SK-N-SH (cell line): ENCODE measurements at regions of chr11 and their contacts with region 1.

Region 1: DNA sequence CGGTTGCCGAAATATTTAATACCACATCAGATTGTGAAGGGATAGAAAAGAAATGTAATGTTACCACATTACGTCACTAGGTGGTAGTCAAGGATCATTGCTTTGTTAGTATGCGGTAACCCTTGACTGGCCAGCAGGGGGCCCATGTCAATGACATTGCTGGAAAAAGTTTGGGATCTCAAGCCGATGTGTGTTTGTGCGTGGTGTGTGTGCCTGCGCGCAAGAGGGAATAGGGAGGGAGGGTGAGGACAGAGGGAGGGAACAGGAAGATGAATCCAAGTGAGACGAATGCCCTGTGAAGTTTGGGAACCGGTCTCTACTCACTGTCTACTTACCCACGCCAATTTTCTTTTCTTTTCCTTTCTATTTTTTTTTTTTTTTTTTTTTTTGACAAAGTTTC is 10.7 kb upstream of the MRGPRX2 start:
- DNase-seq: peak; percentile 81
- H3K4me3 ChIP-seq: peak overlapping the region; percentile 27 to 30; a peak in 3 of 4 replicates
- H3K27ac ChIP-seq: no peak overlapping the region
- H3K4me1 ChIP-seq: peaks cover 0 to 2% of the 10 kb centered on the region in 2 experiments; a peak in 1 of 4 replicates
- H3K27me3 ChIP-seq: no peaks in the 10 kb centered on the region
- CTCF ChIP-seq: peak; percentile 99
- EP300 ChIP-seq: no peak
- RAD21 ChIP-seq: peak; percentile 93

Region 2: GRCh38 chr11:18310800-18311340 is 760.4 kb before region 1 on chr11:
- CTCF ChIA-PET with region 1: no interaction called
- POLR2A ChIA-PET with region 1: no interaction called
- DNase-seq: no peak
- H3K4me3 ChIP-seq: no peak overlapping the region
- H3K27ac ChIP-seq: no peak overlapping the region
- H3K4me1 ChIP-seq: peaks cover 0 to 8% of the 10 kb centered on the region in 2 experiments; a peak in 3 of 4 replicates
- H3K27me3 ChIP-seq: no peaks in the 10 kb centered on the region
- CTCF ChIP-seq: no peak
- EP300 ChIP-seq: no peak
- RAD21 ChIP-seq: no peak

Region 3: GRCh38 chr11:18934195-18934814 is 136.9 kb before region 1 on chr11:
- CTCF ChIA-PET with region 1: no interaction called
- POLR2A ChIA-PET with region 1: no interaction called
- DNase-seq: no peak
- H3K4me3 ChIP-seq: no peak overlapping the region
- H3K27ac ChIP-seq: no peak overlapping the region
- H3K4me1 ChIP-seq: no peaks in the 10 kb centered on the region; a peak in 1 of 4 replicates
- H3K27me3 ChIP-seq: peaks cover 6% of the 10 kb centered on the region; the same call in 1 of the 2 replicates
- CTCF ChIP-seq: no peak
- EP300 ChIP-seq: no peak
- RAD21 ChIP-seq: no peak

Region 4: GRCh38 chr11:19060629-19061028 is 10.6 kb before region 1 on chr11 and contains the start of gene MRGPRX2:
- CTCF ChIA-PET with region 1: interaction called, 50 read pairs
- POLR2A ChIA-PET with region 1: no interaction called
- DNase-seq: no peak
- H3K4me3 ChIP-seq: no peak within 1 kb of the TSS
- H3K27ac ChIP-seq: no peak within 1 kb of the TSS
- H3K4me1 ChIP-seq: no peaks in the 10 kb centered on the region
- H3K27me3 ChIP-seq: peaks cover 16% of the 10 kb centered on the region
- CTCF ChIP-seq: no peak
- EP300 ChIP-seq: no peak
- RAD21 ChIP-seq: no peak
- polyA plus RNA-seq, gene MRGPRX2: not detected in 2 replicates

Region 5: DNA sequence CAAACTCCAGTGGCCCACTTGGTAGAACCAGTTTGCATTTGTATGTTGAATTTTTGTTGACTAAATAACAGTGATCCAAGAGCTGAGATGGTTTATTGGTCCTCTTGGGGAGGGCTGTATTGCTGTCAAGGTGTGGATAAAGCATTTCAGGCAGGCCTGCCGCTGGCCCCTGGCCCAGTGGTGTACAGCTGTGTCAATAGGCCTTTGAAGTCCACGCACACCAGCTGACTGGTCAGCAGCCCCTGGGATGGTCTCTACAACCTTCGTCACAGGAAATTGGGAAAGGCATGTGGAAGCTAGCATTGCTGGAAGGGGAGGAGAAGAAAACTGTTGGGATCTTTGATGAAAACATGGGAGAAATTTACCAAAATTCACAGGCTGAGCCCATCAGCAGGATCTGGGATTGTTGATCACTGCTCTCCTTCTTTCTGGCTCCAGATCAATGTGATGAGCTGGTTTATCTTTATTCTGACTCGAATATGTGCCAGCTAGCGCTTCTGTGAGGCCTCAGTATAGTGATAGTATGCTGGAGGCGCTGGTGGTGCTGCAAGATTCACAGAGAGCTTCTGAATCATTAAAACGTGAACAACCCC is 182.0 kb after region 1 on chr11:
- CTCF ChIA-PET with region 1: interaction called, 29 read pairs
- POLR2A ChIA-PET with region 1: no interaction called
- DNase-seq: no peak
- H3K4me3 ChIP-seq: no peak overlapping the region
- H3K27ac ChIP-seq: no peak overlapping the region
- H3K4me1 ChIP-seq: peaks cover 0 to 10% of the 10 kb centered on the region in 2 experiments; a peak in 1 of 4 replicates
- H3K27me3 ChIP-seq: peaks cover 8% of the 10 kb centered on the region; the same call in 1 of the 2 replicates
- CTCF ChIP-seq: no peak
- EP300 ChIP-seq: no peak
- RAD21 ChIP-seq: no peak

Region 6: GRCh38 chr11:19306179-19306944 is 235.1 kb after region 1 on chr11:
- CTCF ChIA-PET with region 1: interaction called, 22 read pairs
- POLR2A ChIA-PET with region 1: no interaction called
- DNase-seq: no peak
- H3K4me3 ChIP-seq: no peak overlapping the region
- H3K27ac ChIP-seq: no peak overlapping the region
- H3K4me1 ChIP-seq: peaks cover 0 to 3% of the 10 kb centered on the region in 2 experiments; a peak in 1 of 4 replicates
- H3K27me3 ChIP-seq: peaks cover 14% of the 10 kb centered on the region; the same call in 1 of the 2 replicates
- CTCF ChIP-seq: no peak
- EP300 ChIP-seq: no peak
- RAD21 ChIP-seq: no peak

Region 7: DNA sequence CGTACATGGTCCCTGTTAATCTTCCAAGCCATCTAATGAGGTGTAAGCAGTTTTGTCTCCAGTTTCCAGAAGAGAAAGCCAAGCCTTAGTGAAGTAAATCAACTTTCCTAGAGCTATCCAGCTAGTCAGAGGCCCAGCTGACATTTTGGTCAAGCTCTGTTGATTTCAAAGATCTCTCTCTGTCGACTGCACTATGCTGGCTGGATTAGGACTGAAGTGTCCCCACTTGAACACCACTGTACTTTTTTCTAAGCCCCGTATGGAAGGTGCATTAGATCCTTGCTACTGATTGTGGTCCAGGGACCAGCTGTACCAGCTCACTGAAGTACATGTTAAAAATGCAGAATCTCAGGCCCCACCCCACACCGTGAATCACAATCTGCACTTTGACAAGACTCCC is 464.9 kb after region 1 on chr11:
- CTCF ChIA-PET with region 1: interaction called, 10 read pairs
- POLR2A ChIA-PET with region 1: no interaction called
- DNase-seq: no peak
- H3K4me3 ChIP-seq: no peak overlapping the region
- H3K27ac ChIP-seq: no peak overlapping the region
- H3K4me1 ChIP-seq: no peaks in the 10 kb centered on the region; a peak in 1 of 4 replicates
- H3K27me3 ChIP-seq: peaks cover 23% of the 10 kb centered on the region; the same call in 1 of the 2 replicates
- CTCF ChIP-seq: no peak
- EP300 ChIP-seq: no peak
- RAD21 ChIP-seq: no peak